ENCODE measurements at regions of chr9 and their contacts with region 1.

Region 1: DNA sequence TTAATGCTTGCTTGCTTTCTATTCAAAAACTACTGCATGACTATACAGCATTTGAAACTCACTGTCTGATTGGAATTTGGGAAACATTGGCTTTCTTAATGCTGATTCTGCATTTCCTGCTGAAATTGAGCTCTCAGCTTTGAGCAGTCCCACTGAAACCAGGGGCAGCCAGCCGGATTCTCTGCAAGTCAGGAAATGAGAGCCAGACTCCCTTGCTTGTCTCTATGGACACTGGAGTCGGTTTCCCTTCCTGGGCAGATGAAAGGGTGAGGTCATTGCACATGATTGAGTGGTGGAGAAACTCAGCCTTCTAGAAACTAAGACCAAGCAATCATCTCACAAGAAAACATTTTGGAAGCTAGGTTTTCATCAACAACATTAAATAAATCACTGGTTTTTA is 119.8 kb upstream of the SPATA31C2 start:
- DNase-seq: peak; percentile 64
- H3K4me3 ChIP-seq: peak overlapping the region in 1 of 3 experiments; percentile 32
- H3K27ac ChIP-seq: peak overlapping the region; percentile 5
- H3K4me1 ChIP-seq: peaks cover 5% of the 10 kb centered on the region
- H3K27me3 ChIP-seq: no peaks in the 10 kb centered on the region
- CTCF ChIP-seq: no peak
- POLR2A ChIP-seq: no peak

Region 2: GRCh38 chr9:87465832-87466231 is 792.2 kb before region 1 on chr9:
- CTCF ChIA-PET with region 1: no interaction called
- POLR2A ChIA-PET with region 1: no interaction called
- dilution Hi-C with region 1: no loop called
- intact Hi-C with region 1: no loop called
- DNase-seq: no peak
- H3K4me3 ChIP-seq: no peak overlapping the region
- H3K27ac ChIP-seq: no peak overlapping the region
- H3K4me1 ChIP-seq: no peaks in the 10 kb centered on the region
- H3K27me3 ChIP-seq: no peaks in the 10 kb centered on the region
- CTCF ChIP-seq: no peak
- POLR2A ChIP-seq: no peak

Region 3: GRCh38 chr9:88236531-88237478 is 21.2 kb before region 1 on chr9:
- CTCF ChIA-PET with region 1: no interaction called
- POLR2A ChIA-PET with region 1: no interaction called
- dilution Hi-C with region 1: no loop called
- intact Hi-C with region 1: no loop called
- DNase-seq: no peak
- H3K4me3 ChIP-seq: no peak overlapping the region
- H3K27ac ChIP-seq: no peak overlapping the region
- H3K4me1 ChIP-seq: no peaks in the 10 kb centered on the region
- H3K27me3 ChIP-seq: no peaks in the 10 kb centered on the region
- CTCF ChIP-seq: no peak
- POLR2A ChIP-seq: no peak

Region 4: GRCh38 chr9:88291856-88292255 is 33.8 kb after region 1 on chr9:
- CTCF ChIA-PET with region 1: no interaction called
- POLR2A ChIA-PET with region 1: no interaction called
- dilution Hi-C with region 1: no loop called
- intact Hi-C with region 1: no loop called
- DNase-seq: no peak
- H3K4me3 ChIP-seq: no peak overlapping the region
- H3K27ac ChIP-seq: no peak overlapping the region
- H3K4me1 ChIP-seq: no peaks in the 10 kb centered on the region
- H3K27me3 ChIP-seq: no peaks in the 10 kb centered on the region
- CTCF ChIP-seq: no peak
- POLR2A ChIP-seq: no peak

Region 5: DNA sequence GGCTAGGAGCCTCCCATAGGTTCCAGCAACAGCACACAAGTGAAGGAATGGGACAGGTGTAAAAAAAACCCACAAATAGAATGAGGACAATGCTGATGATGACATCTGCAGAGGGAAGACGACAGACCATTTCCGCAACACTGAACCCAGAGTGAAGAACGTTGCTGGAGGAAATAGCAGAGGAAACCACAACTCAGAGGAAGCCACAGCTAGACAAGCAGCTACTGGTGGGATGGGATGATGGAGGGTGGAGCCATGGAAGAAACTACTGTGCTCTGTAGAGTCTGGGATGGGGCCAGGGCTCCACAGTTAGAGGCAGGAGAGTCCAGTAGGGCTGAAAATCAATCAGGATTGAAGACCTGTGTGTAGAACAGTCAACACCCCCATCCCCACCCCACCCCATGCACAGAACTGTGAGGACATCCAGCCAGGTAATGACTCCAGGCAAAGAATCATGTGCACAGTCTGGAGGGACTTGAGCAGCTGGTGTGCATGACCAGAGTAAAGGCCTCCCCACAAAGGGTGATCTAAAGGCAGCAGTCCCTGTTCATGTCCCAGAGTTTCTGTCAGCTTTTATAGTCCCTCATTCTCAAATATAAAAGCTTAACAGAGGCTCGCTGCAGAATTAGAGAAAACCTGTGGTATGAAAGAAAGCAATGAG is 65.0 kb after region 1 on chr9:
- CTCF ChIA-PET with region 1: no interaction called
- POLR2A ChIA-PET with region 1: no interaction called
- dilution Hi-C with region 1: no loop called
- intact Hi-C with region 1: loop called (anchors 5 kb)
- DNase-seq: no peak
- H3K4me3 ChIP-seq: no peak overlapping the region
- H3K27ac ChIP-seq: no peak overlapping the region
- H3K4me1 ChIP-seq: no peaks in the 10 kb centered on the region
- H3K27me3 ChIP-seq: no peaks in the 10 kb centered on the region
- CTCF ChIP-seq: no peak
- POLR2A ChIP-seq: no peak

Region 6: DNA sequence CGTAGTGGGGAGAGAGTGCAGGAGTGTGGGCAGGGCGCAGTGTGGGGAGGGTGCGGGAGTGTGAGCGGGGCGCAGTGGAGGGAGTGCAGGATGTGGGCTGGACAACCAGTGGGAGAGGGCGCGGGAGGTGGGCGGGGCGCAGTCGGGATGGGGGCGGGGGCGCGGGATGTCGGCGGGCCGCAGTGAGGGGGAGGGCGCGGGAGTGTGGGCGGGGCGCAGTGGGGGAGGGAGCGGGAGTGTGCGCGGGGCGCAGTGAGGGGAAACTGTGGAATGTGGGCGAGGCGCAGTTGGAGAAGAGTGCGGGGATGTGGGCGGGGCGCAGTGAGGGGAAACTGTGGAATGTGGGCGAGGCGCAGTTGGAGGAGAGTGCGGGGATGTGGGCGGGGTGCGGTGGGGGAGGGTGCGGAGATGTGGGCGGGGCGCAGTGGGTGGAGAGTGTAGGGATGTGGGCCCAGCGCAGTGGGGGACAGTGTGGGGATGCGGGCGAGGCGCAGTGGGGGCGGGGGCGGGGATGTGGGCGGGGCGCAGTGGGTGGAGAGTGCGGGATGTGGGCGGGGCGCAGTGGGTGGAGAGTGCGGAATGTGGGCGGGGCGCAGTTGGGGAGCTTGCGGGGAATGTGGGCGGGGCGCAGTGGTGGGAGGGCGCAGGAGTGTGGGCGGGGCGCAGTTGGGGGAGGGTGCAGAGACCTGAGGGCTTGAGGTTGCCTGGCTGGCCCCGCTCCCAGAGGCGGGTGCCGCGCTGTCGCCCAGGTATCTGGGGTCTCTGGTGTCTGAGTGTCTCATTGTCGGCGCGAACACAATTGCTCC is 276.6 kb after region 1 on chr9 and contains the start of gene NXNL2:
- CTCF ChIA-PET with region 1: no interaction called
- POLR2A ChIA-PET with region 1: no interaction called
- dilution Hi-C with region 1: no loop called
- intact Hi-C with region 1: loop called (anchors 5 kb)
- DNase-seq: peak; percentile 61
- H3K4me3 ChIP-seq: peak within 1 kb of the TSS; percentile 13 to 49 (median 14)
- H3K27ac ChIP-seq: no peak within 1 kb of the TSS
- H3K4me1 ChIP-seq: peaks cover 5% of the 10 kb centered on the region
- H3K27me3 ChIP-seq: peaks cover 16 to 23% of the 10 kb centered on the region in 2 experiments
- CTCF ChIP-seq: no peak
- POLR2A ChIP-seq: no peak
- total RNA-seq, gene NXNL2: not detected in 2 replicates